ENCODE measurements at regions of chr2 and their contacts with region 1.

Region 1: GRCh38 chr2:27489498-27490397 is at the start of gene IFT172:
- DNase-seq: peak; percentile 100
- ATAC-seq: peak; percentile 97
- H3K4me3 ChIP-seq: peak within 1 kb of the TSS; percentile 57 to 79 (median 59)
- H3K4me3 Mint-ChIP-seq: peak within 1 kb of the TSS; percentile 92
- H3K27ac ChIP-seq: peak within 1 kb of the TSS; percentile 60 to 84
- H3K27ac Mint-ChIP-seq: peak within 1 kb of the TSS; percentile 93
- H3K4me1 ChIP-seq: peaks cover 19 to 21% of the 10 kb centered on the region in 2 donors
- H3K4me1 Mint-ChIP-seq: peaks cover 27% of the 10 kb centered on the region
- H3K27me3 ChIP-seq: peaks cover 0 to 20% (median 10%) of the 10 kb centered on the region in 4 experiments
- H3K27me3 Mint-ChIP-seq: peaks cover 17% of the 10 kb centered on the region
- CTCF ChIP-seq: no peak
- total RNA-seq, gene IFT172: 33.3 and 41.0 TPM in 2 replicates

Region 2: GRCh38 chr2:27380626-27381545 is 108.9 kb before region 1 on chr2 and contains the start of gene ZNF513:
- CTCF ChIA-PET with region 1: no interaction called
- POLR2A ChIA-PET with region 1: no interaction called
- intact Hi-C with region 1: loop called (anchors 1 kb)
- DNase-seq: peak; percentile 92
- ATAC-seq: peak; percentile 94
- H3K4me3 ChIP-seq: peak within 1 kb of the TSS; percentile 40 to 66 (median 63)
- H3K4me3 Mint-ChIP-seq: peak within 1 kb of the TSS; percentile 94
- H3K27ac ChIP-seq: peak within 1 kb of the TSS; percentile 56 to 94
- H3K27ac Mint-ChIP-seq: peak within 1 kb of the TSS; percentile 96
- H3K4me1 ChIP-seq: peaks cover 16 to 20% of the 10 kb centered on the region in 2 donors
- H3K4me1 Mint-ChIP-seq: peaks cover 30% of the 10 kb centered on the region
- H3K27me3 ChIP-seq: no peaks in the 10 kb centered on the region
- H3K27me3 Mint-ChIP-seq: no peaks in the 10 kb centered on the region
- CTCF ChIP-seq: no peak
- total RNA-seq, gene ZNF513: 29.0 and 31.7 TPM in 2 replicates

Region 3: DNA sequence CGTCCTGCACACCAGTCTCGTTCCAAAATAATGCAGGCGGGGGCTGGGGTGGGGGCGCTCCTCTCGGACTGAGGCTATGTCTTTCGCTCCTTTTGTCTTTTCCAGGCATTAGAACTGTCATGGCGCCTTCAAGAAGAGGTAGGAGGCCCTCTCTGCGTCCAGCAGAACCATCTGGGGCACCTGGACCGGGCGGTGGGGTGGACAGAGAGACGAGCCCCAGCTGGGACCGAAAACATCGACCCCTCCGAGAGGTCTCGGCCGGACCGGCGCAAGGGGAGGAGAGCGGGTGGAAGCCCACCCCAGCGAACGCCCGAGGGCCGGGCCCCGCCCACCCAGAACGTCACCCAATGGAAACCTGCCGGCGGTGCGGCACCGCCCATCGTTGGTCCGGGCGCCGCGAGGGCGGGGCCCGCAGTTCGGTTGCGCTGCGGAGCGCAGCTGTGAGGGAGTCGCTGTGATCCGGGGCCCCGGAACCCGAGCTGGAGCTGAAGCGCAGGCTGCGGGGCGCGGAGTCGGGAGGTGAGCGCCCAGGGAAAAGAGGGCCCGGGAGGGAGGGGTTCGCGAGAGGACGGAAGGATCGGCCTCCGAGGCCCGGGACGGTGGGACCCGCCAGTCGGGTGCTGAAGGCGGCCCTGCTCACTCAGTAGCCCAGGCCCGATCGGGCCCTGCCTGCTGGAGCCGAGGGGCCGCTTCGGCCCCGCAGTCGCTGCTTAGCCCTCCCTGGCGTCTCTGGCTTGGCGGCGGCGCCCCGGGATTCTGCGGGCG is 61.4 kb before region 1 on chr2 and contains the start of gene NRBP1:
- CTCF ChIA-PET with region 1: no interaction called
- POLR2A ChIA-PET with region 1: no interaction called
- intact Hi-C with region 1: loop called (anchors 1 kb)
- DNase-seq: peak; percentile 95
- ATAC-seq: peak; percentile 92
- H3K4me3 ChIP-seq: peak within 1 kb of the TSS; percentile 68 to 98 (median 88)
- H3K4me3 Mint-ChIP-seq: peak within 1 kb of the TSS; percentile 97
- H3K27ac ChIP-seq: peak within 1 kb of the TSS; percentile 82 to 86
- H3K27ac Mint-ChIP-seq: peak within 1 kb of the TSS; percentile 97
- H3K4me1 ChIP-seq: peaks cover 15 to 21% of the 10 kb centered on the region in 2 donors
- H3K4me1 Mint-ChIP-seq: peaks cover 29% of the 10 kb centered on the region
- H3K27me3 ChIP-seq: no peaks in the 10 kb centered on the region
- H3K27me3 Mint-ChIP-seq: no peaks in the 10 kb centered on the region
- CTCF ChIP-seq: no peak
- total RNA-seq, gene NRBP1: 109 and 115 TPM in 2 replicates

Region 4: GRCh38 chr2:27582695-27583389 is 93.1 kb after region 1 on chr2 and contains the start of gene ZNF512:
- CTCF ChIA-PET with region 1: no interaction called
- POLR2A ChIA-PET with region 1: interaction called, 3 read pairs
- intact Hi-C with region 1: loop called (anchors 1 kb)
- DNase-seq: peak; percentile 93
- ATAC-seq: peak; percentile 94
- H3K4me3 ChIP-seq: peak within 1 kb of the TSS; percentile 66 to 98 (median 80)
- H3K4me3 Mint-ChIP-seq: peak within 1 kb of the TSS; percentile 96
- H3K27ac ChIP-seq: peak within 1 kb of the TSS; percentile 70 to 72
- H3K27ac Mint-ChIP-seq: peak within 1 kb of the TSS; percentile 96
- H3K4me1 ChIP-seq: peaks cover 17 to 29% of the 10 kb centered on the region in 2 donors
- H3K4me1 Mint-ChIP-seq: peaks cover 40% of the 10 kb centered on the region
- H3K27me3 ChIP-seq: no peaks in the 10 kb centered on the region
- H3K27me3 Mint-ChIP-seq: peaks cover 1% of the 10 kb centered on the region
- CTCF ChIP-seq: no peak
- total RNA-seq, gene ZNF512: 65.2 and 72.3 TPM in 2 replicates

Region 5: DNA sequence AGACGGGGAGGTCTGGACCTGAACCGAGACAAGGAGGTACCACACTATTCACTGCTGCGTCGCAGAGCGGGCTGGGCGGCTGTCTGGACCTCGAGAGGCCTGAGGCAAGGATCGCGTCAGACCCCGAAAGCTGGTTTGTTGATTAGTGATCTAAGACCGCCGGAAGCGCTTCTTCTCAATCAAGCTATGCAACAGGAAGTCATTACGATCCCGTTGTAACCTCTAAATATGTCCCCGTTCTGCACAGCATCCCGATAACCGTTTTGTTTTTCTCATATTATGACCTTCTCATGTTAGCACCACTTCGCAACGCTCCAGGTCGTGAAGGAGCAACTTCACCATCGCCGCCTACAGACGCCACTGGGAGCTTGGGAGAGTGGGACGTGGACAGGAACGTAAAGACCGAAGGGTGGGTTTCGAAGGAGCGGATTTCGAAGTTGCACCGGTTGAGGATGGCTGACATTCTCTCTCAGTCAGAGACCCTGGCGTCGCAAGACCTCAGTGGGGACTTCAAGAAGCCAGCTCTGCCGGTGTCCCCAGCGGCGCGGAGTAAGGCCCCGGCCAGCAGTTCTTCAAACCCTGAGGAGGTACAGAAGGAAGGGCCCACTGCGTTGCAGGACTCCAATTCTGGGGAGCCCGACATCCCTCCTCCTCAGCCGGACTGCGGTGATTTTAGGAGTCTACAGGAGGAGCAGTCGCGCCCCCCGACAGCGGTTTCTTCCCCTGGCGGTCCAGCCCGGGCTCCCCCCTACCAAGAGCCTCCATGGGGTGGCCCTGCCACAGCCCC is 173.9 kb after region 1 on chr2 and contains the starts of genes SLC4A1AP and SUPT7L:
- CTCF ChIA-PET with region 1: no interaction called
- POLR2A ChIA-PET with region 1: no interaction called
- intact Hi-C with region 1: loop called (anchors 1 kb)
- DNase-seq: peak; percentile 94
- ATAC-seq: peak; percentile 80
- H3K4me3 ChIP-seq: peak within 1 kb of the TSS; percentile 75 to 100 (median 97)
- H3K4me3 Mint-ChIP-seq: peak within 1 kb of the TSS; percentile 99
- H3K27ac ChIP-seq: peak within 1 kb of the TSS; percentile 75 to 99
- H3K27ac Mint-ChIP-seq: peak within 1 kb of the TSS; percentile 99
- H3K4me1 ChIP-seq: peaks cover 19 to 23% of the 10 kb centered on the region in 2 donors
- H3K4me1 Mint-ChIP-seq: peaks cover 42% of the 10 kb centered on the region
- H3K27me3 ChIP-seq: no peaks in the 10 kb centered on the region
- H3K27me3 Mint-ChIP-seq: no peaks in the 10 kb centered on the region
- CTCF ChIP-seq: no peak
- total RNA-seq, gene SLC4A1AP: 23.1 and 25.6 TPM in 2 replicates
- total RNA-seq, gene SUPT7L: 40.2 and 40.7 TPM in 2 replicates

Measured in B cell (primary cell).